ENCODE measurements at regions of chr15 and their contacts with region 1.

Region 1: DNA sequence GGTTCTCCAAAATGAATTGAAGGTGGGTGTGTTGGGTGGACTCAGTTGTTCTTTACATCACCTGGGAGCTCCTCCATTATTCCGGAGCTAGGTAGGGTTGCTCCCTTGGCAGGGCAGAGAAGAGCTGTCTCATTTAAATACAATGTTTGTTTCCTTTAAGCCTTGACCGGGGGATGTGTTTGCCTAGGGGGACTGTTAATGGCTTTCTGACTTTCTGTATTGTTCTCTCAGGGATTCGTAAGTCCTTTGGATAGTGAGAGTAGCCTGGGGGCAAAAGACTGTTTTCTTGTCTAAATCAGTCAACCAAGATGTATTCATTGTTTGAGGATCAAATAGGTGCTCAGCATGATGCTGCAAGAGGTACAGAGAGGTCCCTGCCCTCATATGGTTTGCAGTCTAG is 71.1 kb downstream of the CDAN1 start:
- DNase-seq: no peak
- CTCF ChIP-seq: no peak

Region 2: GRCh38 chr15:43168192-43169107 is 502.6 kb after region 1 on chr15:
- CTCF ChIA-PET with region 1: no interaction called
- POLR2A ChIA-PET with region 1: interaction called, 12 read pairs
- DNase-seq: no peak
- CTCF ChIP-seq: no peak

Measured in GM10248 (cell line).